ENCODE measurements at regions of chr13 and their contacts with region 1.

Region 1: GRCh38 chr13:97221989-97222700 is at the start of gene MBNL2:
- DNase-seq: peak; percentile 93
- ATAC-seq: peak; percentile 98
- H3K4me3 Mint-ChIP-seq: peak within 1 kb of the TSS; percentile 80
- H3K27ac Mint-ChIP-seq: peak within 1 kb of the TSS; percentile 95
- H3K4me1 Mint-ChIP-seq: peaks cover 31% of the 10 kb centered on the region
- H3K27me3 Mint-ChIP-seq: no peaks in the 10 kb centered on the region
- total RNA-seq, gene MBNL2: 16.7 to 24.5 TPM

Region 2: GRCh38 chr13:97109841-97110492 is 112.2 kb before region 1 on chr13:
- CTCF ChIA-PET with region 1: interaction called, 29 read pairs
- POLR2A ChIA-PET with region 1: interaction called, 4 read pairs
- intact Hi-C with region 1: loop called in 1 of 2 experiments (anchors 2 kb)
- DNase-seq: peak; percentile 88
- ATAC-seq: peak; percentile 93
- H3K4me3 Mint-ChIP-seq: no peak overlapping the region
- H3K27ac Mint-ChIP-seq: no peak overlapping the region
- H3K4me1 Mint-ChIP-seq: peaks cover 14% of the 10 kb centered on the region
- H3K27me3 Mint-ChIP-seq: peaks cover 12% of the 10 kb centered on the region

Region 3: DNA sequence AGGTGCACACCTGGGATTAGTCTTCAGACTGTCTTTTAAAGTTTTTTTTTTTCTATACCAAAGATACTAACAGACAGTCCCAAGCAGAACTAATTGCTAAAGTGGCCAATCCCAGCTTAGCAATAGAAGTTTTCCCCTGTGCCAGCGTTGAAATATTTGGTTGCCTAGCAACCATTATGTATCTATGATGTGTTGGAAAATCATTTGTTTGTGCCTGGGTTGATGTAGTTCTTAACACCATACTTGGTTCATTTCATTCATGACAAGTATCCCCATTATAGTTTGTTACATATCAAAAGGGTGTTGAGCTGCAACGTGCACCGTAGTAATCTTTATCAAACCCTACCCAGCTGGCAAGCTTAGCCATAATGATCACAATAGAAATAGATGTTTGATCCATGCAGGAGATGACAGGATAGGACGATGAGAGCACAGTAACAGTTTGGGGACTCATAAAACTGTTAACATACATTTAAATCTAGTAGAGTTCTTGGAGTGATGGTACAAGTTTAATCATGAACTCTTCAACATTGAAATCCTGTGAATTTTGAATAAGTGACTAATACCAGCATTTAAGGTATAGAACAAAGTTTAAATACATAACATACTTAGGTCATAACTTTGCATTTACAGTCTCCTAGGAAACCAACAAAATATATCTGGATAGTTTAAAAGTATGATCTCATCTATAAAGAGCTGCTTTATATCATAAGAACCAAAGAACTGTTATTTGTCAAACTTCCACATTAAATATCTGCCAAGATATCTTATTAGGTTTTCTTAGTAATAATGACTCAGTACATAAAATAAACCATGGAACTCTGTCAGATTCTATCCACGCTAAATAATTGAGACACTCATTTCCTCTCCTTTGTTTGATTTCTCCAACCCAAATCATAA is 73.4 kb after region 1 on chr13:
- CTCF ChIA-PET with region 1: interaction called, 4 read pairs
- POLR2A ChIA-PET with region 1: interaction called, 4 read pairs
- intact Hi-C with region 1: loop called in 1 of 2 experiments (anchors 1 kb)
- DNase-seq: no peak
- ATAC-seq: no peak
- H3K4me3 Mint-ChIP-seq: no peak overlapping the region
- H3K27ac Mint-ChIP-seq: no peak overlapping the region
- H3K4me1 Mint-ChIP-seq: peaks cover 46% of the 10 kb centered on the region
- H3K27me3 Mint-ChIP-seq: no peaks in the 10 kb centered on the region

Region 4: DNA sequence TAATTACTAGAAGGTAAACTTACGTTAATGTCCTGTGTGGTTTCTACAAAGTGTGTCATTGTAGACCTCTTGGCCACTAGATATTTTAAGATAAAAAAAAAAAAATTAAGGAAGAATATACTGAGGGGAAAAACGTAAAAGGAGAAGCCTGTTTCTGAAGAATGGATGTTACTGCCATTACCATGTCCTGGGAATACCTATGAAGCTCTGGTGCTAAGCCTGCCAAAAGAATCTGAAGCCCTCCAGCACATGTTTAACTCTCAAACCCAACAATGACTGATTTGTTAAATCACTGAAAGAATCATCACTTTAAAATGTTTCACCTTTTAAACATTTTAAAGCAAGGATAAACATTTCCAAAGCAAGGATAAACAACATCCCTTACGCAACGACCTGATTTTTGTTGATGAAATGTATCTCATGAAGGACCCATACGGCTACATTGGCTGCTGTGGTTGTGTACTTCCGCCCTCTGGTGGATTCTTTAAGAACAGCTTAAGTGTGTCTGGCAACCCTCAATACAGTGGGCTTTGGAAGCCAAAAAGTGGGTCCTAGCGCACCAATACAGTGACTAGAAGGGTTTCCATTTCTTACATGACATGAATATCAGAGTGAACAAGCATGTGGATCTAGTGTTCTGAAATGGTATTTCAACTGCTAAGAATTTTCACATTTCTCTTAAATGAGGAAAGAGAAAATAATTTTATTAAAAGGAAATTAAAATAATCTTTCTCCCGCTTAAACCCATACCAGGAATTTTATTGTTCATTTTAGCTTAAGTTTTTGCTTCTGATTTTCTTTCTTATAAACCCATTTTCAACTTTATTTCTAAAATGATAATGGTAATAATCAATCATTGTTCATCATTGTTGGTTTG is 137.3 kb after region 1 on chr13:
- CTCF ChIA-PET with region 1: interaction called, 10 read pairs
- POLR2A ChIA-PET with region 1: no interaction called
- intact Hi-C with region 1: loop called (anchors 2 to 5 kb)
- DNase-seq: peak; percentile 58
- ATAC-seq: peak; percentile 90
- H3K4me3 Mint-ChIP-seq: no peak overlapping the region
- H3K27ac Mint-ChIP-seq: no peak overlapping the region
- H3K4me1 Mint-ChIP-seq: no peaks in the 10 kb centered on the region
- H3K27me3 Mint-ChIP-seq: no peaks in the 10 kb centered on the region

Region 5: GRCh38 chr13:97411984-97412383 is 189.8 kb after region 1 on chr13:
- CTCF ChIA-PET with region 1: no interaction called
- POLR2A ChIA-PET with region 1: no interaction called
- intact Hi-C with region 1: no loop called
- DNase-seq: no peak
- ATAC-seq: no peak
- H3K4me3 Mint-ChIP-seq: no peak overlapping the region
- H3K27ac Mint-ChIP-seq: no peak overlapping the region
- H3K4me1 Mint-ChIP-seq: no peaks in the 10 kb centered on the region
- H3K27me3 Mint-ChIP-seq: peaks cover 9% of the 10 kb centered on the region

Region 6: GRCh38 chr13:97422118-97423054 is 200.2 kb after region 1 on chr13:
- CTCF ChIA-PET with region 1: no interaction called
- POLR2A ChIA-PET with region 1: no interaction called
- intact Hi-C with region 1: no loop called
- DNase-seq: no peak
- ATAC-seq: no peak
- H3K4me3 Mint-ChIP-seq: no peak overlapping the region
- H3K27ac Mint-ChIP-seq: no peak overlapping the region
- H3K4me1 Mint-ChIP-seq: no peaks in the 10 kb centered on the region
- H3K27me3 Mint-ChIP-seq: peaks cover 12% of the 10 kb centered on the region

Region 7: DNA sequence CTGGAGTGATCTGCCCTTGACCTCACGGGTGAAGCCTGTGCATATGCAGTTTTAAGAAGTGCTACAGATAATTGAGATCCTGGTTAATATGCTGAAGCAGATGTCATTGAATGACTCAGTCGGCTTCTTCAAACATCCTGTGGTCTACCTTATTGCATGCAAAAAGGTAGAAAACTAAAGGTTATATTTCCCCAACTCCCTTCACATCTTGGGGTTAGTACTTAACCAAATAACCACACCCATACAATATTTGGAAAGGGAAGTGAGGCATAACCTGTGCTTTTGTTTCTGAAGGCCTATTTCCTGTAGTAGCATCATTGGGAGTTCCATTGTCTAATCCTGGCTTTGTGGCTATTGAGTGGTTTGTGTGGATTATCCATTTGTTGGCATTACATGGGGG is 270.1 kb after region 1 on chr13:
- CTCF ChIA-PET with region 1: no interaction called
- POLR2A ChIA-PET with region 1: no interaction called
- intact Hi-C with region 1: no loop called
- DNase-seq: no peak
- ATAC-seq: no peak
- H3K4me3 Mint-ChIP-seq: no peak overlapping the region
- H3K27ac Mint-ChIP-seq: no peak overlapping the region
- H3K4me1 Mint-ChIP-seq: no peaks in the 10 kb centered on the region
- H3K27me3 Mint-ChIP-seq: peaks cover 3% of the 10 kb centered on the region

Region 8: DNA sequence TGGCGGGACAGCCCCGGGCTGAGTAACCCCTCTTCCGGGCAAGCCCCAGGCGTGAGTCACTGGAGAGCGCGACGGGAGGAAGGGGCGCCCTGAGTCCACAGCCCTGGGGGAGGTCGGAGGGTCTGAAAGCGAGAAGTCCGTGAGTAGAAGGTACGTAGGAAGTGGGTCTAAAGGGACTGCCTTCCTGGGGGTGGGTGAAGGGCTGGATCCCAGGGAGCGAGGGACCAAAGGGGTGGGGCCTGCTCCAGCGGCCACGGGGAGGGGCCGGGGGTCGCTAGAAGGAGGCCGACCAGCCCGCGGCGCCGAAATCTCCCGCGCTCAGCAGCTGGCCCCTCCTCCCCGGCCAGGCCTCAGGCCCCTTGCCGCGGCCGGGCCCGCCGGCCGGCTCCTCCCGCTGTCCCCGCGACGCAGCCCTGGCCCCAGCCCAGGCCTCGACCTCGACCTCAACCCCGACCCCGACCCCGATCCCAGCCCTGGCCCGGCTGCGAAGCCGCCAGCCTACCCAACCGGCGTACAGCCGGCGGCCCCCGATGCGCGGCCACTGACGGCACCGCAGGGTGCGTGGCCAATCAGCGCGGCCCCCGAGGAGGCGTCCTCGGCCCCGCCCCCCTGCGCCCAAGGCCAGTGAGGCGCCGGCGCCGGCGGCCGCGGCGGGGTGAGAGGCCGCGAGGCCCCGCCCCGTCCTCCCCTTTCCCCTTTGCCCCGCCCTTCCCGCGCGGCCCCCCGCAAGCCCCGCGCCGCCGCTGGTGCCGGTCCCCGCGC is 753.9 kb after region 1 on chr13:
- CTCF ChIA-PET with region 1: no interaction called
- POLR2A ChIA-PET with region 1: no interaction called
- intact Hi-C with region 1: loop called in 1 of 2 experiments (anchors 10 kb)
- DNase-seq: peak; percentile 94
- ATAC-seq: peak; percentile 92
- H3K4me3 Mint-ChIP-seq: peak overlapping the region; percentile 99
- H3K27ac Mint-ChIP-seq: peak overlapping the region; percentile 96
- H3K4me1 Mint-ChIP-seq: peaks cover 31% of the 10 kb centered on the region
- H3K27me3 Mint-ChIP-seq: no peaks in the 10 kb centered on the region